ENCODE measurements at regions of chr6 and their contacts with region 1.

Region 1: GRCh38 chr6:152117156-152118133 is 310.0 kb downstream of the ESR1 start:
- H3K4me3 Mint-ChIP-seq: no peak overlapping the region
- H3K27ac Mint-ChIP-seq: no peak overlapping the region
- H3K4me1 Mint-ChIP-seq: peaks cover 5% of the 10 kb centered on the region
- H3K27me3 Mint-ChIP-seq: peaks cover 7% of the 10 kb centered on the region

Region 2: GRCh38 chr6:151958331-151958730 is 159.1 kb before region 1 on chr6:
- intact Hi-C with region 1: loop called (anchors 10 kb)
- H3K4me3 Mint-ChIP-seq: no peak overlapping the region
- H3K27ac Mint-ChIP-seq: no peak overlapping the region
- H3K4me1 Mint-ChIP-seq: no peaks in the 10 kb centered on the region
- H3K27me3 Mint-ChIP-seq: peaks cover 7% of the 10 kb centered on the region

Region 3: GRCh38 chr6:152271776-152272464 is 154.5 kb after region 1 on chr6:
- intact Hi-C with region 1: no loop called
- H3K4me3 Mint-ChIP-seq: no peak overlapping the region
- H3K27ac Mint-ChIP-seq: no peak overlapping the region
- H3K4me1 Mint-ChIP-seq: peaks cover 6% of the 10 kb centered on the region
- H3K27me3 Mint-ChIP-seq: no peaks in the 10 kb centered on the region

Region 4: GRCh38 chr6:152552616-152553209 is 435.3 kb after region 1 on chr6:
- intact Hi-C with region 1: no loop called
- H3K4me3 Mint-ChIP-seq: no peak overlapping the region
- H3K27ac Mint-ChIP-seq: no peak overlapping the region
- H3K4me1 Mint-ChIP-seq: peaks cover 6% of the 10 kb centered on the region
- H3K27me3 Mint-ChIP-seq: peaks cover 2% of the 10 kb centered on the region

Measured in dendritic cell treated with granulocyte-macrophage colony-stimulating factor and Interleukin-4, amounts not matched to agents 40 ng/mL and 50 ng/mL, for 4 days (primary cell).